Activated CD4-positive, alpha-beta memory T cell treated with anti-CD3 and anti-CD28 coated beads for 36 hours (primary cell): ENCODE measurements at regions of chr14 and their contacts with region 1.

Region 1: DNA sequence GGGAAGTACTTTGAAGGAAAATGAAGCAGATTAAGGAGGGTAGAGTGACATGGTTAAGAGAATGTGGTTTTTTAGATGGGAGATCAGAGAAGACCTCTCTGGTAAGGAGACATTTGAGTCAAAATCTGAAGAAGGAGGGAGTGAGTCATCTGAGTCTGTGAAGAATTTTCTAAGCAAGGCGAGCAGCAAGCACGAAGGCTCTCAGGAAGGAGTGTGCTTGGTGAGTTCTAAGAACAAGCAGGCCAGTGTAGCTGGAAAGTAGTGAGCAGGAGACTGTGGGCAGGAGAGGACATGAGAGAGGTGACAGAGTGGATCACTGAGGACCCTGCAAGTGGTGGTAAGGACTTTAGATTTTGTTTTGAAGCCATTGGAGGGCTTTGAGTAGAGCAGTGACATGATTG is 76.3 kb upstream of the FUT8 start:
- DNase-seq: peak; percentile 73
- H3K4me3 Mint-ChIP-seq: peak overlapping the region; percentile 72
- H3K27ac Mint-ChIP-seq: peak overlapping the region; percentile 90
- H3K4me1 Mint-ChIP-seq: peaks cover 44% of the 10 kb centered on the region
- H3K27me3 Mint-ChIP-seq: no peaks in the 10 kb centered on the region

Region 2: GRCh38 chr14:65222440-65222858 is 113.7 kb before region 1 on chr14:
- CTCF ChIA-PET with region 1: no interaction called
- POLR2A ChIA-PET with region 1: no interaction called
- intact Hi-C with region 1: loop called (anchors 1 kb)
- DNase-seq: peak; percentile 78
- H3K4me3 Mint-ChIP-seq: no peak overlapping the region
- H3K27ac Mint-ChIP-seq: peak overlapping the region; percentile 45
- H3K4me1 Mint-ChIP-seq: peaks cover 33% of the 10 kb centered on the region
- H3K27me3 Mint-ChIP-seq: no peaks in the 10 kb centered on the region

Region 3: GRCh38 chr14:65302571-65303189 is 33.5 kb before region 1 on chr14:
- CTCF ChIA-PET with region 1: no interaction called
- POLR2A ChIA-PET with region 1: interaction called, 3 read pairs
- intact Hi-C with region 1: loop called (anchors 1 kb)
- DNase-seq: peak; percentile 87
- H3K4me3 Mint-ChIP-seq: peak overlapping the region; percentile 40
- H3K27ac Mint-ChIP-seq: peak overlapping the region; percentile 87
- H3K4me1 Mint-ChIP-seq: peaks cover 45% of the 10 kb centered on the region
- H3K27me3 Mint-ChIP-seq: no peaks in the 10 kb centered on the region

Region 4: DNA sequence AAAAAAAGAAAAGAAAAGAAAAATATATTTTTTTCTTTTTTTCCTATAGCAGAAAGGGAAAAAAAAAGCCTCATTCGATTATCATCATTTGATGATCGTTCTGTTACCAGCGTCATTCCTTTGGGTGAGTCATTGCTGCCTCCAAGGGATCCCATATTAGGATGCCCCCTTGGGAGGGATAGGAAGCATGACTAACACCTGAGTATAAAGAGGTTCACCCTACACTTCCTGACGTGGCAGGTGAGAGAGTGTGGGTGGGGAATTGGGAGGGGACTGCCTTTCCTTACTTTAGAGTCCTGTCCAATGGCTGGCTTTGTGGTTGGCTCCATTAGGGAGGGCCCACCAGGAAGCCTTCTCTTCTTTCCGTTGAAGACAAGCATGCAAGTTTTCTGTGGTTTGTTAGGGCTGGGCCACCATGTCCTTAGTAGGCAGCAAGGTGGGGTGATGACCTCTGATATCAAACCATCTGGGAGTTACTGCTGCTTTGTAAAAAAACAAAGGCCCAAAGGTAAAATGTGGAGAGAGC is 20.2 kb after region 1 on chr14:
- CTCF ChIA-PET with region 1: no interaction called
- POLR2A ChIA-PET with region 1: interaction called, 3 read pairs
- intact Hi-C with region 1: loop called (anchors 1 kb)
- DNase-seq: peak; percentile 70
- H3K4me3 Mint-ChIP-seq: no peak overlapping the region
- H3K27ac Mint-ChIP-seq: peak overlapping the region; percentile 57
- H3K4me1 Mint-ChIP-seq: peaks cover 43% of the 10 kb centered on the region
- H3K27me3 Mint-ChIP-seq: no peaks in the 10 kb centered on the region